ENCODE measurements at regions of chr2 and their contacts with region 1.

Region 1: GRCh38 chr2:636641-637405 is 40.4 kb downstream of the TMEM18 start:
- DNase-seq: no peak
- H3K4me3 Mint-ChIP-seq: peak overlapping the region; percentile 72
- H3K27ac Mint-ChIP-seq: peak overlapping the region; percentile 72
- H3K4me1 Mint-ChIP-seq: peaks cover 4% of the 10 kb centered on the region
- H3K27me3 Mint-ChIP-seq: peaks cover 15% of the 10 kb centered on the region

Region 2: GRCh38 chr2:246489-247144 is 390.2 kb before region 1 on chr2:
- intact Hi-C with region 1: loop called (anchors 10 kb)
- DNase-seq: no peak
- H3K4me3 Mint-ChIP-seq: no peak overlapping the region
- H3K27ac Mint-ChIP-seq: no peak overlapping the region
- H3K4me1 Mint-ChIP-seq: peaks cover 4% of the 10 kb centered on the region
- H3K27me3 Mint-ChIP-seq: no peaks in the 10 kb centered on the region

Region 3: DNA sequence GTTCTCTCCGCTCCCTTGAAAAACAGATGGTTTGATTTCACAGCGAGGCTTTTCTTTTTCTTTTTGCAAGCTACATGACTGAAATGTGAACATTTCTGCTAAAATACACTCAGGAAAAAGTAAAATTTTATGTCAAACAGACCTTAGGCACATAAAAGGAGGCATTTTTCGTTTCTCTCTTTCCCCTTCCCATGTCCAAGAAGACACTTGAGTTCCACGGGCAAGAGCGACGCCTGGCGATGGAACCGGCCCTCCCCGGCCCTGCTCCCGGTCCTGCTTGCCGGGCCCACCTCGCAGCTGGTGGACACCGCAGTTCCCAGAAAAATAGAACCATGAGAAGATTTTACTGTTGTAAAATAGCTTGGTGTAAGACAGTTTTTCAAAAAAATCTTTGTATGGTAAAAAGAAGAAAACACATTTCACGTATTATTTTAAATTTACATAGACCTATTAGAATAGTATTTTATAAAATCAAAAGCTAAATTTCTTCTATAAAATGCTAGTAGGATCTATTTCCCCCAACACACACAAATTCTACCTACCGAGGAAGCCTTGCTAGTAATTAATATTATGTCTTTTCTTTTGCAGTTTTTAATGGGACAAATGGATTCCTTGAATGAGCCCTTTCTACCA is 346.6 kb before region 1 on chr2:
- intact Hi-C with region 1: loop called (anchors 2 kb)
- DNase-seq: peak; percentile 28
- H3K4me3 Mint-ChIP-seq: peak overlapping the region; percentile 71
- H3K27ac Mint-ChIP-seq: no peak overlapping the region
- H3K4me1 Mint-ChIP-seq: peaks cover 8% of the 10 kb centered on the region
- H3K27me3 Mint-ChIP-seq: peaks cover 34% of the 10 kb centered on the region

Region 4: DNA sequence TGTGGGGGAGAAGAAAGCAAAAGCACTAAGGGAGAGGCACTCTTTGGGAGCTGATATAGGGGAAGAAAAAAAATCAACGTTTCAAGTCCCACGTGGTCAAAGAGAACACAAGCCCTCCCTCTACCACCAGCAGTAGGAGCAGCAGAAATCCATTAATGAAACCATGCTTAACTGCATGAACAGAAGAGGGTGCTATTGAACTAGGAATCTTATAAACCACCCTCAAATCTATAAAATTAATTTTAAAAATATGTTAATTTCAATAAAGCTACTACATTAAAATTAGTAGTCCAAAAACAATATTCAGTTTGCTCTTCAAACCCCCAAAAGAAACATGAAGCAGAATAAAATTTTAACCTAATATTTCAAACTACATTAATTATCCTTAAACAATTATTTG is 107.4 kb before region 1 on chr2:
- intact Hi-C with region 1: loop called (anchors 2 kb)
- DNase-seq: no peak
- H3K4me3 Mint-ChIP-seq: no peak overlapping the region
- H3K27ac Mint-ChIP-seq: no peak overlapping the region
- H3K4me1 Mint-ChIP-seq: no peaks in the 10 kb centered on the region
- H3K27me3 Mint-ChIP-seq: peaks cover 6% of the 10 kb centered on the region

Region 5: DNA sequence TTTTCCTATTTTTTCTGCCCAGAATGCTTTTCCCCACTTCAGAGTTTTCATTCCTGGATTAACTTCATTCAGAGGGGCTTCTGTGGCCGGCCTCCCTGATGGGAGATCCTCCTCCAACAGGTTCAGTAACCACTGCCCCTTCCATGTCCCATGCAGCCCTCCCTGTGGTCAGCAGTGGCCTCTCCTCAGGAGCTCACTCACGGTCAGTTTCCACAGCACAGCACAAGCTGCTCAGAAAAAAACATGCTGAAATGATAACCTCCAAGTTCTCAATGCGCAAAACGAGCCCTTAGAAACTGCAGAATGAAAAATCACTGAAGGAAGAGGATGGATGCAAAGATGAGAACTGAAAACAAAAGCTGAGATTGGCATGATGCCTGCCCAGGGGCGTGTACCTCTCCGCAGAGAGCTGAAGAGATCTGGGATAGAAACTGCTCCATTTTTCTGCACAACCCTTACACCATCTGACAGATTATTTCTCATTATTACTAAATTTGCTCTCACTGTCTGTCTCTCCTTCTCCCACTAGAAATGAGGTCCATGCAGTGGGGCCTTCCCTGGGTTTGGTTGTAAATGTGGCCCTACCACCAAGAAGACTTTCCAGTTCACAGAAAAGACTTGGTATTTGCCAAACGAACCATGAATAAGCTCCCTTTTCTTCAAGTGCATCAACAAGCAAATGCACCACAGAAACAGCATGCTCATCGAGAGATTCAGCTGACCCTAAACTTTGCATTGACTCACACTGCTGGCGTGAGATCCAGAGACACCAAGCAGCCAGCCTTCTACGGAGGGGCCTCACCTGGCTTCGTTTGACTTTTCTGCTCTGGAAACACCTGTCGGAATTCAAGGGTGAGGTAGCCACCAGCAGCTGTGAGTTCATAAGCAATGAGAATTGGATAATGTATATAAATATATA is 11.1 kb before region 1 on chr2:
- intact Hi-C with region 1: no loop called
- DNase-seq: no peak
- H3K4me3 Mint-ChIP-seq: no peak overlapping the region
- H3K27ac Mint-ChIP-seq: no peak overlapping the region
- H3K4me1 Mint-ChIP-seq: no peaks in the 10 kb centered on the region
- H3K27me3 Mint-ChIP-seq: no peaks in the 10 kb centered on the region

Region 6: GRCh38 chr2:660586-661359 is 23.9 kb after region 1 on chr2:
- intact Hi-C with region 1: no loop called
- DNase-seq: no peak
- H3K4me3 Mint-ChIP-seq: no peak overlapping the region
- H3K27ac Mint-ChIP-seq: no peak overlapping the region
- H3K4me1 Mint-ChIP-seq: peaks cover 39% of the 10 kb centered on the region
- H3K27me3 Mint-ChIP-seq: peaks cover 2% of the 10 kb centered on the region